ENCODE measurements at regions of chr22 and their contacts with region 1.

Region 1: DNA sequence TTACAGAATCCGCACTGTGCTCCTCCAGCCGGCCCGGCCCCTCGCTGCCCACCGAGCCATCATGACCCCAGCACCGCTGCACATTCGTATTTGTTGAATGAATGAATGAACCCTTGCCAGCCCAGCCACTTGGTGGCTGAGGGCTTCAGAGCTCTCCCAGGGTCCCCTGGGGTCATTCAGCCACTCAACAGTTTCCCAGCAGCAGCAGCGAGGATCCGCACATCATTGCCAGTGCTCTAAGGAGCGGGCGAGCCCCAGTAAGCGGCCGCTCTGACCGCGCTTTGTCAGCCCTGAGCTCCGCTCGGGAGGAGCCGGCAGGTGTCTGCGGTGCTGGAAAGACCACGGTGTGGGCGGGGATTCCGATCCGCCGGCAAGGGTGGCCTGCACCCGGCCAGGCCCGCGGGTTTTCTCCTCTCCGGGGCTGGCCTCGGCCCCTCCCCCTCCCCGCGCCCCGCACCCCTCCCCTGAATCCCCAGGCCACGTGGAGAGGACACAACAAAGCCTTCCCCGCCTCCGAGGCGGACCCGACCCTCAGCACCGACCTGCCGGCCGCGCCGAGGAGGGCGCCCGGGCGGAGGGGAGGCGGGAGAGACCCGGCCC is 563 bp downstream of the BID start:
- DNase-seq: peak in 1 of 2 experiments; percentile 81
- H3K4me3 ChIP-seq: peak overlapping the region; percentile 51 to 71 (median 62)
- H3K27ac ChIP-seq: peak overlapping the region; percentile 60; the same call in 1 of the 2 replicates
- H3K4me1 ChIP-seq: peaks cover 0 to 20% (median 16%) of the 10 kb centered on the region in 4 experiments; a peak in 6 of 7 replicates
- H3K27me3 ChIP-seq: no peaks in the 10 kb centered on the region
- CTCF ChIP-seq: no peak
- EP300 ChIP-seq: no peak
- POLR2A ChIP-seq: peak in 1 of 2 experiments; percentile 82; a peak in 2 of 3 replicates
- RAD21 ChIP-seq: no peak

Region 2: DNA sequence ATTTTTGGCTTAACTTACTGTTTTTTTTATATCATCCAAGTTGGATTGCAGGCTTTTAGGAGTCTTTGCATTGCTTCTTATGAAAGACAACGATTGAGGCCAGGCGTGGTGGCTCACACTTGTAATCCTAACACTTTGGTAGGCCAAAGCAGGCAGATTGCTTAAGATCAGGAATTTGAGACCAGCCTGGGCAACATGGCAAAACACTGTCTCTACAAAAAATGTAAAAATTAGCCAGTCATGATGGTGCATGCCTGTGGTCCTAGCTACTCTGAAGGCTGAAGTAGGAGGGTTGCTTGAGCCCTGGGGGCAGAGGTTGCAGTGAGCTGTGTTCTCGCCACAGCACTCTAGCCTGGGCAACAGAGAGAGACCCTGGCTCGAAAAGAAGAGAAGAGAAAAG is 56.0 kb before region 1 on chr22:
- CTCF ChIA-PET with region 1: no interaction called
- POLR2A ChIA-PET with region 1: no interaction called
- DNase-seq: no peak
- H3K4me3 ChIP-seq: no peak overlapping the region
- H3K27ac ChIP-seq: no peak overlapping the region
- H3K4me1 ChIP-seq: no peaks in the 10 kb centered on the region
- H3K27me3 ChIP-seq: no peaks in the 10 kb centered on the region
- CTCF ChIP-seq: no peak
- EP300 ChIP-seq: no peak
- POLR2A ChIP-seq: no peak
- RAD21 ChIP-seq: no peak

Region 3: GRCh38 chr22:17742527-17742902 is 31.2 kb before region 1 on chr22:
- CTCF ChIA-PET with region 1: interaction called, 52 read pairs
- POLR2A ChIA-PET with region 1: interaction called, 13 read pairs
- DNase-seq: peak; percentile 80 to 96
- H3K4me3 ChIP-seq: no peak overlapping the region
- H3K27ac ChIP-seq: no peak overlapping the region
- H3K4me1 ChIP-seq: peaks cover 0 to 7% (median 4%) of the 10 kb centered on the region in 4 experiments; a peak in 5 of 7 replicates
- H3K27me3 ChIP-seq: no peaks in the 10 kb centered on the region
- CTCF ChIP-seq: peak; percentile 90 to 98 (median 96)
- EP300 ChIP-seq: peak in 1 of 2 experiments; percentile 64; a peak in 1 of 3 replicates
- POLR2A ChIP-seq: no peak
- RAD21 ChIP-seq: peak; percentile 94 to 97

Region 4: DNA sequence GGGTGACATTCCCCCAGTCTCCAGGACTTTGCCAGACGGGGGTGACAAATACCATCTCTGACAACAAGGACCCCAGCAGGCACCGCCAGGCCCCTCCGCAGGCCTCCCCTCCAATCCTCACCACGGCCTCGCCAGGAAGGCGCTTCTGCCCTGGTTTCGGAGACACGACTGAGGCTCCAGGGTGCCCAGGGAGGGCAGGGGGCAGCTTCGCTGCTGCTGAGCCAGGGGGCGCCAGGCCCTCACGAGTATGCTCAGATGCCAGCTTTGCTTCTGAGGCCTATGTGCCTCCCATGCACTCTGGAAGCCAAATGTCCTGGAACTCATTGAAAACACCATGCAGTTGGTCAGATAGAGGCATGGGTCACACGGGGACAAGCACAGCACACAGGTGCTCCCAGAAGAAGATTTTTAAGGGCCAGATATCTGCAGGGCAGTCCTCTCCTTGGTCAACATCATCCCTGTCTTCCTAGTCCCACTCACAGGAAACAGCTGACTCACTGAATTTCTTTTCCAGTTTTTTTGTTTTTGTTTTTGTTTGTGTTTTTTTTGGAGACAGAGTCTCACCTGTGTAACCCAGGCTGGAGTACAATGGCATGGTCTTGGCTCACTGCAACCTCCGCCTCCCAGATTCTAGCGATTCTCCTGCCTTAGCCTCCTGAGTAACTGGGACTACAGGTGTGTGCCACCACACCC is 19.3 kb before region 1 on chr22:
- CTCF ChIA-PET with region 1: interaction called, 21 read pairs
- POLR2A ChIA-PET with region 1: interaction called, 4 read pairs
- DNase-seq: no peak
- H3K4me3 ChIP-seq: no peak overlapping the region
- H3K27ac ChIP-seq: no peak overlapping the region
- H3K4me1 ChIP-seq: no peaks in the 10 kb centered on the region; a peak in 1 of 7 replicates
- H3K27me3 ChIP-seq: no peaks in the 10 kb centered on the region
- CTCF ChIP-seq: peak; percentile 73 to 85 (median 82)
- EP300 ChIP-seq: no peak
- POLR2A ChIP-seq: no peak
- RAD21 ChIP-seq: peak; percentile 86 to 89

Measured in H1 (cell line).